K562 (cell line): ENCODE measurements at regions of chr11 and their contacts with region 1.

Region 1: DNA sequence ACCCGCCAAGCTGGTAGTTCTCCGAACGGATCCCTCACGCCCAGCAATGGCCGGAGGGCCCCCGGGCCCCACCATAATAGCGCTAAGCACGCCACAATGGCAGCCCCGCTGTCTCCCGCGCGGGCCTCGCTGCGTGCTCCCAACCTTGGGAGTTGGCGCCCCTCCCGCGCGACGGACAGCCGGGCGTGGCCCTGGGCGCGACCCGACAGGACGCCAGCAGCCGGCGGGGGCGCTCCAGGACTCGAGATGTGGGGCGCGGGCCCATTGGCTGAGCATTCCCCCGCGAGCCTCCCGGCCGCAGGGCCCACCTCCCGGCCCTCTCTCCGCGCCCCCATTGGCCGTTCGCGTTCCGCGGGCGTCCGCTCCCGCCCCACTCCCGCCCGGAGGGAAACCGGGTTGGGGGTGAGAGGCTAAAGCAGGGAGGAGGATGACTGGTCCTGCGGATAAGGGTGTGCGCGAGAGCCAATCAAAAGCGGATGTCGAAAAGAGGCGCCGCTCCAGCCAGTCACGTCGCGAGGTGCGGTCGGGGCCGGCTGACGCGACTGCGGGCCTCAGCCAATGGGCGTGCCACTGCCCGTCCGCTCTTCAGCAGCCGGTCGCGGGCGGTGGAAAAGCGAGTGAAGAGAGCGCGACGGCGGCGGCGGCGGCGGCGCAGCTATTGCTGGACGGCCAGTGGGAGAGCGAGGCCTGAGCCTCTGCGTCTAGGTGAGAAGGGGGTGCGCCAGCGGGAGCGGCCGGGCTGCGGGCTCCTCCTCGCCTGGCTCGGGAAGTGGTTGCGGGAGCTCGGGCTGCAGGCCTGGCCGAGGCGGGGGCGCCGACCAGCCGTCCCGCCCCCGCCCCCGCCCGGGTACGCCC is at the start of gene FAR1:
- DNase-seq: peak; percentile 97
- ATAC-seq: peak; percentile 95
- H3K4me3 ChIP-seq: peak within 1 kb of the TSS; percentile 89
- H3K27ac ChIP-seq: peak within 1 kb of the TSS; percentile 72
- H3K4me1 ChIP-seq: peaks cover 14 to 19% of the 10 kb centered on the region in 2 experiments
- H3K27me3 ChIP-seq: no peaks in the 10 kb centered on the region
- CTCF ChIP-seq: peak; percentile 62 to 76 (median 70)
- EP300 ChIP-seq: no peak
- POLR2A ChIP-seq: peak; percentile 72
- RAD21 ChIP-seq: peak; percentile 9 to 54; a peak in 2 of 4 replicates
- polyA plus RNA-seq, gene FAR1: 17.7 to 23.3 TPM

Region 2: DNA sequence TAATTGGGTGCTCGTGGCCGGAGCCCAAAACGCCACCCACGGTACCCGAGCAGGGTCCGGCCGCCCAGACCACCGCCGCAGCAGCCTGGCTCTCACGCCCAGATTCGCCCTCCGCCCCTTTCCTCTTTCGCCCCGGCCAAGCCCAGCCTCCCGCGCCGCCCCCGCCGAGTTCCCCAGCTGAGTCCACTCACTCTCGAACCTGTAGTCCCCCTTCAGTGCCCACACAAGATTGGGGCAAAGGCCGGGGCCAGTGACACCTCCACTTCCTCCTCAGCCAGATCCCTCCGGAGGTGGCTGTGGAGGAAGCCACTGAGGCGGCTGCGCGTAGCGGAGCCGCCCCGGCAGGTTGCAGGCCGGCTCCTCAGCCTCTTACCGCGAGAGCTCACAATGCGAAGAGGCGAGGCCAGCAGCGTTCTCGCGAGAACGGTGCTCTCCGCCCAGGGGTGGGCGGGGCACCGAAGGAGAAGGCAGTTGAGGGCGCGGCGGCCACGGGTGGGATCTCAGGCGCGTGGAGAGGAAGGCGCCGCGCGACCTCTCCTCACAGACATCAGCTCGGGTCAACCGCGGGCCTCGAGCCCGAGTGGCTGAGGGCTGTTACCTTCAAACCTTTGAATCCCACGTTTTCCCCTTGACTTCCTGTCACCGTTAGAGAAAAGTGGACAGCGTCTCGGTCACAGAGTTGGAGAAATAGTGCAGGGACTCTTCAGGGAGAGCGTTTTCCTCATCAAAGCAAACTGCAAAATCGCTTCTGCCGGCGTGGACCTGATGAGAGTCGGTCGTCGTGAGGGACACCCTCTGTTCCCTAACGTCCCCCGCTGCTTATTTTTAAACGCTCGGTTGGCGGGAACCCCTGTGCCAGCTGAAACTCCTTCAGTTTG is 205.2 kb before region 1 on chr11 and contains the start of gene BTBD10:
- CTCF ChIA-PET with region 1: no interaction called
- POLR2A ChIA-PET with region 1: no interaction called
- in situ Hi-C with region 1: no loop called
- intact Hi-C with region 1: loop called (anchors 10 kb)
- DNase-seq: peak; percentile 92 to 97 (median 94)
- ATAC-seq: peak; percentile 100
- H3K4me3 ChIP-seq: peak within 1 kb of the TSS; percentile 91
- H3K27ac ChIP-seq: peak within 1 kb of the TSS; percentile 79
- H3K4me1 ChIP-seq: peaks cover 8 to 14% of the 10 kb centered on the region in 2 experiments
- H3K27me3 ChIP-seq: no peaks in the 10 kb centered on the region
- CTCF ChIP-seq: peak in 1 of 3 experiments; percentile 50; a peak in 2 of 6 replicates
- EP300 ChIP-seq: 0 out of 2 replicates have a peak, but pooled peaks have one; percentile 25
- POLR2A ChIP-seq: peak; percentile 97
- RAD21 ChIP-seq: no peak
- polyA plus RNA-seq, gene BTBD10: 13.4 to 21.4 TPM

Region 3: DNA sequence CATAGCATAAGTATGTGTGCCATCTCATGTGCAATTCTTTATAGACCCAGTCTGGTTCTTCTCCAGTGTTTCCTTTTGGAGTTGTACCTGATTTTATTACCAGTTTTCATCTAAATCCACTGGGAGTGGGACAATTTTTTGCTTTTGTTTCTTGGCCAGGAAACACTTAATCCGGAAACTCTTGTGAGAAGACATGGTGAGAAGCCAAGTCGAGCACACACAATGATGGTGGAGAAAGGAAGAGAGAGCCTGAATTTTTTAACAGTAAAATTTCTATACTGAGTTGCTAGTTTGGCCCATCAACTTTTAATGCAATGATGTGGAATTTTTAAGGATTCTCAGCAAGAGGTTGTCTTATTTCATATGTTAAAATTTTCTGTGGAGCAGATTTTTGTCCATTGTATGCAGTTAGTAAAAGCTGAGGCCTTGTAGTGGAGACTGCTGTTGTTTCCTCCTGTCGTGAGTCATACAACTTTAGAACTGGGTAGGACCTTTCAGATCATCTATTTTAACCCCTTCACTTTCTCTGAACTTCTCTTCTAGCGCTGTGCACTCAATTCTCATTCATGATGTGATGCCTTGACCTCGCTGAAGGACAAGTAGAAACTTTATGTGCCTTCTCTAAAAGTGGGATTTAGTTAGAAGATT is 17.3 kb after region 1 on chr11:
- CTCF ChIA-PET with region 1: no interaction called
- POLR2A ChIA-PET with region 1: interaction called, 13 read pairs
- in situ Hi-C with region 1: no loop called
- intact Hi-C with region 1: no loop called
- DNase-seq: peak in 1 of 4 experiments; percentile 11
- ATAC-seq: peak; percentile 71
- H3K4me3 ChIP-seq: no peak overlapping the region
- H3K27ac ChIP-seq: peak overlapping the region; percentile 27; the same call in 1 of the 3 replicates
- H3K4me1 ChIP-seq: peaks cover 0 to 7% of the 10 kb centered on the region in 2 experiments; a peak in 3 of 5 replicates
- H3K27me3 ChIP-seq: no peaks in the 10 kb centered on the region
- CTCF ChIP-seq: no peak
- EP300 ChIP-seq: no peak
- POLR2A ChIP-seq: no peak
- RAD21 ChIP-seq: no peak

Region 4: DNA sequence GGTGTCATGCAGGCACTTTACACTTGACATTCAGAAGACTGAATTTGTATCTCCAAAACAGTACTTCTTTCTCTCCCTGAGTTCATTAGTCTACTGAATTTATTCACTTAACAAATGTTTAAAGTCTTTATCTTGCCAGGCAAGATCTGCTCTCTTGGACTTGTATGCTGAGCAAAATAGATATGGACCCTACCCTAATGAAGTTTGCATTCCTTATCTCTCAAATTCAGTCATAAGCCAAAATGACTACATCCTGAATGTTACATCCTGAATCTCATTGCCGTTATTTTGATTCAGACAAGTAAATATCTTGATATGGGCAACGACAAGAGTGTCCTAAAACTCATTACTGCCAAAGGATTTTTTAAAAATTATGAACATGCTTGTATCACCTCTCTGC is 29.8 kb after region 1 on chr11:
- CTCF ChIA-PET with region 1: no interaction called
- POLR2A ChIA-PET with region 1: interaction called, 3 read pairs
- in situ Hi-C with region 1: no loop called
- intact Hi-C with region 1: loop called (anchors 2 kb)
- DNase-seq: peak in 2 of 4 experiments; percentile 42 to 66
- ATAC-seq: peak; percentile 68
- H3K4me3 ChIP-seq: no peak overlapping the region
- H3K27ac ChIP-seq: peak overlapping the region; percentile 65
- H3K4me1 ChIP-seq: peaks cover 14 to 30% of the 10 kb centered on the region in 2 experiments
- H3K27me3 ChIP-seq: no peaks in the 10 kb centered on the region
- CTCF ChIP-seq: no peak
- EP300 ChIP-seq: peak; percentile 88
- POLR2A ChIP-seq: no peak
- RAD21 ChIP-seq: no peak